MCF 10A (cell line): ENCODE measurements at regions of chr21 and their contacts with region 1.

Region 1: DNA sequence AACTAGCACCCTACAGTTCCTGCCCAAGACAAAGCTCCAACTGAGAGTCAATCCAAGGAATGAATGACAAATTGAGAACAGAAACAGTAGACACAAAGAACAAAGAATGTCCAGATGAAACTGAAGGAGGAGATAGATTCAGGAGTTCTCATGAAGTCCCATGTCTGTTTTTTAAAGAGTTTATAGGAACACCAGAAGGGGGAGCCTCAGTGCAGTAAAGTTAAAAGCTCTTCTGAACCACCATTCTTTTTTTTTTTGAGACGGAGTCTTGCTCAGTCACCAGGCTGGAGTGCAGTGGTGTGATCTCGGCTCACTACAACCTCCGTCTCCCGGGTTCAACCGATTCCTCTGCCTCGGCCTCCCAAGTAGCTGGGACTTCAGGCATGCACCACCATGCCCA is 323.6 kb downstream of the MRPL39 start:
- DNase-seq: peak; percentile 54
- H3K4me3 Mint-ChIP-seq: no peak overlapping the region
- H3K27ac Mint-ChIP-seq: no peak overlapping the region
- H3K4me1 Mint-ChIP-seq: peaks cover 6% of the 10 kb centered on the region
- H3K27me3 Mint-ChIP-seq: no peaks in the 10 kb centered on the region
- CTCF ChIP-seq: peak; percentile 37

Region 2: GRCh38 chr21:25298512-25299491 is 15.1 kb after region 1 on chr21:
- CTCF ChIA-PET with region 1: interaction called, 10 read pairs
- POLR2A ChIA-PET with region 1: no interaction called
- intact Hi-C with region 1: no loop called
- DNase-seq: no peak
- H3K4me3 Mint-ChIP-seq: no peak overlapping the region
- H3K27ac Mint-ChIP-seq: no peak overlapping the region
- H3K4me1 Mint-ChIP-seq: peaks cover 27% of the 10 kb centered on the region
- H3K27me3 Mint-ChIP-seq: no peaks in the 10 kb centered on the region
- CTCF ChIP-seq: no peak

Region 3: DNA sequence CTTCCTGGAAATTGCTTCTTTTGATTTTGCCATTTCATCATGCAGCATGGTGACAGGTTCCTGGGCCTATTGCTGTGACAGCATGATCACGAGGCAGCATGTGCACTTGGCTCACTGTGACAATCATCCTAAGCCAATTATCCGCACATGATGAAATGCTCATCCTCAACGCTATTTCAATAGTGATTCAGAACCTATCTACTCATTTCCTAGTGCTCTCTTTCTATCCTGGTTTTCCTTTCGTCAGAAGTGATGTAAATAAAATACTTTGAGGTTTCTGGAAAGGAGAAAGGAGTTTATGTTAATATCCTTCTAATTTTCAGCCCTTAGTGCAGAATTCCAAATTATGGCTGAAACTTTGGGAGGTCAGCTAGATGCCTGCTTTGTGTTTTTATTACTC is 1793.8 kb after region 1 on chr21:
- CTCF ChIA-PET with region 1: no interaction called
- POLR2A ChIA-PET with region 1: no interaction called
- intact Hi-C with region 1: no loop called
- DNase-seq: no peak
- H3K4me3 Mint-ChIP-seq: no peak overlapping the region
- H3K27ac Mint-ChIP-seq: no peak overlapping the region
- H3K4me1 Mint-ChIP-seq: no peaks in the 10 kb centered on the region
- H3K27me3 Mint-ChIP-seq: no peaks in the 10 kb centered on the region
- CTCF ChIP-seq: no peak